ENCODE measurements at regions of chr15 and their contacts with region 1.

Region 1: GRCh38 chr15:70318594-70319465 is 221.1 kb upstream of the TLE3 start:
- DNase-seq: no peak
- ATAC-seq: peak; percentile 25
- H3K4me3 Mint-ChIP-seq: peak overlapping the region; percentile 72
- H3K27ac Mint-ChIP-seq: peak overlapping the region; percentile 85
- H3K4me1 Mint-ChIP-seq: peaks cover 57% of the 10 kb centered on the region
- H3K27me3 Mint-ChIP-seq: no peaks in the 10 kb centered on the region
- CTCF ChIP-seq: no peak

Region 2: DNA sequence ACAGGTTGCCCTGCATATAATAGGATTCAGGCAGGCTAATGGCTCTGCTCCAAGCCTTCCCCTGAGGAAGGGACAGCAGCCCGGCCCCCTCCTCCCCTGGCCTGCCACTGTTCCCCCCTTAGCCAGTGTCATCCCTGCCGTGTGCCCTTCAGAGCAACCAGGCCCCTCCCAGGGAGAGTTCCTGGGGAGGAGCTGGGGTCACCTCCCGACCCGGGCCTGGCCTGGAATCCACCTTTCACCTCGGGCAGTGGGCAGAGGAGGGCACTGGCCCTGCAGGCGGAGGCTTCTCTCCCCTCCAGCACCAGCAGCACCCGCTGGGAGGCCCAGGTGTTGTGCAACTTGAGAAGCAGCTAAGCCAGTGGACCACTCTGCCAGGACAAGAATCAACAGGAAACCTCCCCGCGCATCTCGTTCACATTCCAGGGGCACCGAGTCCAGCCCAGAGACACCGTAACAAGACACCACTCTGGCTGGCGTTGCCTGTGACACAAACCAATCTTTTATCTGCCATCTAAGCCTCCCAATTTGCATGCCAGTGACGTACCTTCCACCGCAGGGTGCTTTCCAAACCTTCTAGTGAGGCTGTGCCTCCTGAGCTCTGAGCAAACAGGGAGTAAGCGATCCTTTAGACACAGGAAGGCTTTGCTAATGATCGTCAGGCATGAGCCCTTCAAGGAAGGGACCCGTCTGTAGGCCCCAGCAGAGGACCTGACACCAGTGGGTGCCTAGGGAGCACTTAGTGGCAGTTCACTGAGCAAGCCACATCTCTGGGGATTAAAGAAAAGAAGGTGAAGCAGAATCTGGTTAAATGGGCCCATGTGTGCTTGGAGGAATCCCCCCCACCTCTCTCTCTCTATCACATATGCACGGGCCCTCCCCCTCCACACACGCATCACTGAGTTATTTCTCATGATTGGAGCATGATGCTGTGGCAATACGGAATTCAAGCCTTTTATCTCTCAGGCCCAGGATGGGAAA is 122.2 kb before region 1 on chr15:
- CTCF ChIA-PET with region 1: no interaction called
- POLR2A ChIA-PET with region 1: no interaction called
- intact Hi-C with region 1: loop called (anchors 2 kb)
- DNase-seq: peak; percentile 62
- ATAC-seq: peak; percentile 82
- H3K4me3 Mint-ChIP-seq: peak overlapping the region; percentile 55
- H3K27ac Mint-ChIP-seq: peak overlapping the region; percentile 79
- H3K4me1 Mint-ChIP-seq: peaks cover 58% of the 10 kb centered on the region
- H3K27me3 Mint-ChIP-seq: peaks cover 7% of the 10 kb centered on the region
- CTCF ChIP-seq: no peak

Region 3: GRCh38 chr15:70214267-70214666 is 104.6 kb before region 1 on chr15:
- CTCF ChIA-PET with region 1: no interaction called
- POLR2A ChIA-PET with region 1: no interaction called
- intact Hi-C with region 1: no loop called
- DNase-seq: no peak
- ATAC-seq: no peak
- H3K4me3 Mint-ChIP-seq: no peak overlapping the region
- H3K27ac Mint-ChIP-seq: no peak overlapping the region
- H3K4me1 Mint-ChIP-seq: peaks cover 8% of the 10 kb centered on the region
- H3K27me3 Mint-ChIP-seq: peaks cover 2% of the 10 kb centered on the region
- CTCF ChIP-seq: no peak

Region 4: DNA sequence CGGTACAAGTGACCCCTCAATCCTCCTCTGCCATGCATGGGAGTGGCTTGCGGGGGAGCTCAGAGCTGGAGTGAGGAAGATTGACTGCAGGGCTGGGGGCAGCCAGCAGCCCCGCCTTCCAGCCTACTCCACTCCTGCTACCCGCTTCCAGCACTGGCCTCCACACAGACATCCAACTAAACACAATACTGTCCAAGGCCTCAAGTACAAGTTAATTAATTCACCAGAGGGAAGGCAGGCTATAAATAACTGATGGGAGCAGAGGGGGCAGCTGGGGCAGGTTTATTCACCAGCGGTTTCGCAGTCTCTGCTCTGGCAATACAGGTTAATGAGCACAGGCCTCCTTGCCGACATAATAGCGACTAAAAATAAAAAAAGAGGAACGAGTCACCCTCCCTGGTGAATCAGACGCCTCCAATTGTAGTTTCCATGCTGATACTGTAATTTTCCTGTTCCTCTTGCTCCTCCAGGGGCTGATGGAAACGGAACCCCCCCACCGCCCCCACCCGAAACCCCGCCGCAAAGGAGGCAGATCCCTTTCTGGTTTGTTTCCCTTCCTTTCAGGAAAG is 54.7 kb before region 1 on chr15:
- CTCF ChIA-PET with region 1: interaction called, 3 read pairs
- POLR2A ChIA-PET with region 1: interaction called, 7 read pairs
- intact Hi-C with region 1: loop called (anchors 1 kb)
- DNase-seq: no peak
- ATAC-seq: peak; percentile 51
- H3K4me3 Mint-ChIP-seq: peak overlapping the region; percentile 57
- H3K27ac Mint-ChIP-seq: peak overlapping the region; percentile 18
- H3K4me1 Mint-ChIP-seq: peaks cover 92% of the 10 kb centered on the region
- H3K27me3 Mint-ChIP-seq: no peaks in the 10 kb centered on the region
- CTCF ChIP-seq: no peak

Region 5: DNA sequence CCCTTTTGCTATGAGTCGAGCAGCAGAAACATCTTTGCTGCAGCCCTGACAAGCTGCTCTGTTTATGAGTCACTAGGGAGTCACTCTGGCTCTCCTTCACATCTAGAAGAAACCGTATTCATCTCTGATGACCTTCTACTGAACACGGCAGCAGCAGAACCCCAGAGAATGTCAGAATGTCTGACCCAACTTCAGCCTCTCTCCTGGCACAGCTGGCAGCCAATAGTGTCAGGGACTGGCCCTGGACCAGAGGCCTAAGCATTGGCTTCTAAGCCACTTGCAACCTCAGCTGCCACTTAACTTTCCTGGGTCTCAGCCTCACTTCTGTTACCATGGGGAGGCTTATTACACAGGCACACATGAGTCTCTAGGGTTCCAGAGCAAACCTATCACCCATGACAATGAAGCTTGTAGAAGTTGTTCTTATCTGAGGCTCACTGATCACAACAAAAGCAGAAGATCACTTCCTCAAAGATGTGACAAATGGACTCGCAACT is 37.0 kb before region 1 on chr15:
- CTCF ChIA-PET with region 1: interaction called, 5 read pairs
- POLR2A ChIA-PET with region 1: interaction called, 10 read pairs
- intact Hi-C with region 1: loop called (anchors 1 kb)
- DNase-seq: peak; percentile 53
- ATAC-seq: peak; percentile 88
- H3K4me3 Mint-ChIP-seq: peak overlapping the region; percentile 33
- H3K27ac Mint-ChIP-seq: peak overlapping the region; percentile 94
- H3K4me1 Mint-ChIP-seq: peaks cover 55% of the 10 kb centered on the region
- H3K27me3 Mint-ChIP-seq: no peaks in the 10 kb centered on the region
- CTCF ChIP-seq: no peak

Region 6: GRCh38 chr15:70385072-70385535 is 66.3 kb after region 1 on chr15:
- CTCF ChIA-PET with region 1: no interaction called
- POLR2A ChIA-PET with region 1: no interaction called
- intact Hi-C with region 1: loop called (anchors 1 kb)
- DNase-seq: no peak
- ATAC-seq: no peak
- H3K4me3 Mint-ChIP-seq: no peak overlapping the region
- H3K27ac Mint-ChIP-seq: no peak overlapping the region
- H3K4me1 Mint-ChIP-seq: peaks cover 24% of the 10 kb centered on the region
- H3K27me3 Mint-ChIP-seq: no peaks in the 10 kb centered on the region
- CTCF ChIP-seq: no peak

Region 7: DNA sequence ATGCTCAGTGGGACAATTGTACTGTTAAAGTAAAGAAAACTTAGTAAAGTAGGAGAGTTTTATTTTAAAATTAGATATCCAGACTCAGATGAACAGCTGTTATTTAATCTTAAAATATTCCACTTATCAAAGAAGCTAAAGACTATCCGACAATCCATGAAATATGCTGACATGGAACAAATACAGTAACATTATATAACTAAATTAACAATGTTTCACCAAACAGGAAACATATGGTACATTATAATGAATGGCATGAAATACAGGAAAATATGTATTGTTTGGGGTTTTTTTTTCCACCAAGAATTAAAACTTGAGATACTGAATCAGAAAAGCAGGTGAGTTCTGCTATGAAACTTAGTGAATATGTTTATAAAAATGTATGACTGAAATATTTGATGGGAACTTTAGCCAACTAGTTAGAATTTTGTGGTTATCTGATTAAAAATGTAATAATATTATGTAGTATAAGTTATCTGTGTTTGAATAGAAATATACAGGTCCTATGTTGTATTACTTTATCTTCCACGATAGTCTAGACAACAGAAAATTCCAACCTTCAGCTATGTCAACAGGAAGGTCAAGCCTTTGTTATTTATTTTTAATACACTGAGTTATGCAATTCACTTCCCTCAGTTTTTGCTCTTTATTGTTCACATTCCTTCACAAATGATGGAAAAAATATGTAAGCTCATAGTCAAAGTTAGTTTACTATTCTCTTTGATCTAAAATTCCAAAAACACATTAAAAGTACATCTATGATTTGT is 371.8 kb after region 1 on chr15:
- CTCF ChIA-PET with region 1: no interaction called
- POLR2A ChIA-PET with region 1: no interaction called
- intact Hi-C with region 1: no loop called
- DNase-seq: no peak
- ATAC-seq: no peak
- H3K4me3 Mint-ChIP-seq: no peak overlapping the region
- H3K27ac Mint-ChIP-seq: no peak overlapping the region
- H3K4me1 Mint-ChIP-seq: no peaks in the 10 kb centered on the region
- H3K27me3 Mint-ChIP-seq: peaks cover 14% of the 10 kb centered on the region
- CTCF ChIP-seq: no peak

Region 8: DNA sequence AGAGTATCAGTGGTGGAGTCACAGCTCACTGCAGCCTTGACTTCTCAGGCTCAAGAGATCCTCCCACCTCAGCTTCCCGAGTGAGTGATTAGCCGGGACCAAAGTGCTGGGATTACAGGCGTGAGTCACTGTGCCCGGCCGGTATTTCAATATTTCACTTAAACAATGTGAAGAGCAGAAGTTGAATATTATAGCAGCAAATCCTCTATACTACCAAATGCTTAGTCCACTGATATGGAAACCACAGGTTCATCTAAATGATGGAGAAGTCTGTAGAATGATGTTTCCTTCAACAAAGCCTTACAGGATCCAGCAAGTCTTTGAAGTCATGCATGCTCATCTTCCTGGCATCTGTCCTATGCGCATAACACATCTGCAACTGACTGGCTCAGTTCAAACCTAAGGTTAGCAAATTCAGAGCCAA is 464.8 kb after region 1 on chr15:
- CTCF ChIA-PET with region 1: no interaction called
- POLR2A ChIA-PET with region 1: no interaction called
- intact Hi-C with region 1: no loop called
- DNase-seq: no peak
- ATAC-seq: no peak
- H3K4me3 Mint-ChIP-seq: no peak overlapping the region
- H3K27ac Mint-ChIP-seq: no peak overlapping the region
- H3K4me1 Mint-ChIP-seq: no peaks in the 10 kb centered on the region
- H3K27me3 Mint-ChIP-seq: peaks cover 15% of the 10 kb centered on the region
- CTCF ChIP-seq: no peak

Measured in activated B cell treated with CpG ODN at 0.5 μM for 24 hours (primary cell).